ENCODE measurements at regions of chr1 and their contacts with region 1.

Region 1: GRCh38 chr1:63813829-63814277 is 40.0 kb downstream of the ROR1 start:
- DNase-seq: no peak
- ATAC-seq: peak in 3 of 4 donors; percentile 33 to 51 (median 49)
- H3K4me3 ChIP-seq: no peak overlapping the region
- H3K27ac ChIP-seq: peak overlapping the region in 8 of 12 donors; percentile 1 to 69 (median 47)
- H3K4me1 ChIP-seq: peaks cover 0 to 83% (median 57%) of the 10 kb centered on the region in 12 donors
- H3K27me3 ChIP-seq: no peaks in the 10 kb centered on the region
- CTCF ChIP-seq: no peak
- POLR2A ChIP-seq: no peak

Region 2: DNA sequence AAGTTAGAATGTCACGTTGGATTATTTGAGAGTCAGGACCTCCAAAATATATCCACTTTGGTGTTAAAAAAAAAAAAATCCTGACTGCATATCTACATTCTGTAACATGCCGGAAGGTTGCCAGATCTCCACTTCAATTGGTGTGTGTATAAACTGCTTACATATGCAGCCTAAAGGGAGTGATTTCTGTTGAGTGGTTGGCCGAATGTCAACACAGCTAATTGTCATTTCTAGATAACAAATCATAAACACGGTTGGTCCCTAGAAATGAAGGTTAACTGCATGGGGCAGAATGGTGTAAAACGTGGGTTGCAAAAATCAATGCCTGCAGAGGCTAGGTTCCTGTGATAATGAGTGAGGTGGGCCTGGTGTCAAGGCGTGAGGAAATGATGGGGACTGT is 55.1 kb before region 1 on chr1:
- intact Hi-C with region 1: loop called in 1 of 10 experiments (anchors 10 kb)
- DNase-seq: no peak
- ATAC-seq: no peak
- H3K4me3 ChIP-seq: no peak overlapping the region
- H3K27ac ChIP-seq: no peak overlapping the region
- H3K4me1 ChIP-seq: peaks cover 0 to 4% (median 0%) of the 10 kb centered on the region in 12 donors
- H3K27me3 ChIP-seq: no peaks in the 10 kb centered on the region
- CTCF ChIP-seq: no peak
- POLR2A ChIP-seq: no peak

Region 3: GRCh38 chr1:63847308-63847910 is 33.6 kb after region 1 on chr1:
- intact Hi-C with region 1: no loop called
- DNase-seq: no peak
- ATAC-seq: no peak
- H3K4me3 ChIP-seq: no peak overlapping the region
- H3K27ac ChIP-seq: no peak overlapping the region
- H3K4me1 ChIP-seq: peaks cover 0 to 33% (median 4%) of the 10 kb centered on the region in 12 donors
- H3K27me3 ChIP-seq: no peaks in the 10 kb centered on the region
- CTCF ChIP-seq: no peak
- POLR2A ChIP-seq: no peak